ENCODE measurements at regions of chr22 and their contacts with region 1.

Region 1: GRCh38 chr22:20016734-20017621 is at the start of gene ARVCF:
- DNase-seq: peak; percentile 94 to 96 (median 95)
- ATAC-seq: peak; percentile 30 to 75 (median 70)
- H3K4me3 ChIP-seq: peak within 1 kb of the TSS; percentile 59 to 93 (median 80)
- H3K27ac ChIP-seq: peak within 1 kb of the TSS in 6 of 12 donors; percentile 17 to 80 (median 50)
- H3K4me1 ChIP-seq: peaks cover 3 to 47% (median 26%) of the 10 kb centered on the region in 12 donors
- H3K27me3 ChIP-seq: peaks cover 0 to 20% (median 0%) of the 10 kb centered on the region in 9 donors
- CTCF ChIP-seq: peak in 7 of 12 donors; percentile 9 to 41 (median 21)
- POLR2A ChIP-seq: peak in 1 of 2 donors; percentile 30
- total RNA-seq, gene ARVCF: 21.2 to 46.6 (median 33.3) TPM

Region 2: GRCh38 chr22:19959043-19959586 is 57.9 kb before region 1 on chr22:
- intact Hi-C with region 1: no loop called
- DNase-seq: peak; percentile 73 to 85 (median 80)
- ATAC-seq: peak; percentile 11 to 65 (median 54)
- H3K4me3 ChIP-seq: peak overlapping the region in 9 of 12 donors; percentile 8 to 42 (median 26)
- H3K27ac ChIP-seq: peak overlapping the region in 7 of 12 donors; percentile 14 to 70 (median 42)
- H3K4me1 ChIP-seq: peaks cover 0 to 55% (median 29%) of the 10 kb centered on the region in 12 donors
- H3K27me3 ChIP-seq: no peaks in the 10 kb centered on the region
- CTCF ChIP-seq: no peak
- POLR2A ChIP-seq: no peak

Region 3: GRCh38 chr22:19970479-19971275 is 46.3 kb before region 1 on chr22:
- intact Hi-C with region 1: loop called (anchors 1 to 2 kb)
- DNase-seq: peak; percentile 56 to 89 (median 64)
- ATAC-seq: peak; percentile 62 to 77 (median 70)
- H3K4me3 ChIP-seq: no peak overlapping the region
- H3K27ac ChIP-seq: peak overlapping the region in 3 of 12 donors; percentile 23 to 55 (median 41)
- H3K4me1 ChIP-seq: peaks cover 0 to 32% (median 5%) of the 10 kb centered on the region in 12 donors
- H3K27me3 ChIP-seq: no peaks in the 10 kb centered on the region
- CTCF ChIP-seq: peak; percentile 90 to 100 (median 95)
- POLR2A ChIP-seq: no peak

Region 4: GRCh38 chr22:19986410-19987341 is 30.3 kb before region 1 on chr22:
- intact Hi-C with region 1: loop called in 1 of 10 experiments (anchors 2 kb)
- DNase-seq: peak; percentile 85 to 93 (median 87)
- ATAC-seq: peak; percentile 17 to 87 (median 70)
- H3K4me3 ChIP-seq: peak overlapping the region; percentile 58 to 96 (median 86)
- H3K27ac ChIP-seq: peak overlapping the region; percentile 72 to 98 (median 92)
- H3K4me1 ChIP-seq: peaks cover 4 to 78% (median 50%) of the 10 kb centered on the region in 12 donors
- H3K27me3 ChIP-seq: no peaks in the 10 kb centered on the region
- CTCF ChIP-seq: no peak
- POLR2A ChIP-seq: peak; percentile 93 to 95

Region 5: GRCh38 chr22:20052309-20053259 is 35.6 kb after region 1 on chr22:
- intact Hi-C with region 1: no loop called
- DNase-seq: no peak
- ATAC-seq: peak in 3 of 4 donors; percentile 10 to 29 (median 17)
- H3K4me3 ChIP-seq: no peak overlapping the region
- H3K27ac ChIP-seq: no peak overlapping the region
- H3K4me1 ChIP-seq: peaks cover 0 to 13% (median 0%) of the 10 kb centered on the region in 12 donors
- H3K27me3 ChIP-seq: no peaks in the 10 kb centered on the region
- CTCF ChIP-seq: no peak
- POLR2A ChIP-seq: no peak

Region 6: DNA sequence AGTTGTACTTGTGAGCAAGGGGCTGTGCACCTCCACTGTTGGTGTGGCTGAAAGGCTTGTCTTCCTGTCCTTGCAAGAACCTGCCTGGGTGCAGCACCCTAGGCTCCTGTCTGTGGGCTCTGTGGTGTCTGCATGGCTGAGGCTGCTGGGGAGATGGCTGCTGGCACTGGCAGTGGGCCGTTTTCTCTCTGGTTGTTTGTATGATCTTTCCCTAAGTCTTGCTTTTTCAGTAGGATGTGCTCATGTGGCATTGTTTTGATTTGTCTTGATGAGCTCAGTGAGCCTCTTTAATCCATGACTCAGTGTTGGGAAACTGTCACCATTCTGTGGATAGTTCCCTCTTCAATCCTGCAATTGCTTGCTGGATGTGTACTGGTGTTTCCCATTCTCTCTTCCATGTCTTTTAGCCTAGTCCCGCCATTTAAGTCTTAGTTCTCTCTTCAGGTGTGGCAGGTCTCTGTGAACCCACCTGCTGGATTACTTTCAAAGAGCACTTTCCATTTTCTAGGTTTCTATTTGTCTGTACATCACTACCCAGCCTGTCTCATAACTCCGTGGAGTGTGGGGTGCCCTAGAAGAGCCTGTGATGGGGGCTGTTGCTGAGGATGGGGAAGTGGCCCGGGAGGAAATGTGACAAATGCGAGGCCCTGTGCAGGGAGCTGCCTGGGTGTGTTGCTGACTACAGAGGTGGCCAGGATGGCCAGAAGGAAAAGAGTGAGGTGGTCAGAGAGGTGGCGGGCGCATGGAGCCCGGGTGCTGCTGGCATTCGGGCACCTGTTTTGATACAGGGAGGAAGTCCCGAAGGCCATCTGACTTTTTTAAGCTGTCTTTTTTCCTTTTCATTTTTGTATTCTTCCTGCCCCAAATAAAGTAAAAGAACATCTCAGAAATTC is 73.6 kb after region 1 on chr22:
- intact Hi-C with region 1: loop called in 1 of 10 experiments (anchors 5 kb)
- DNase-seq: peak in 2 of 5 donors; percentile 9 to 14
- ATAC-seq: no peak
- H3K4me3 ChIP-seq: no peak overlapping the region
- H3K27ac ChIP-seq: peak overlapping the region in 1 of 12 donors; percentile 30
- H3K4me1 ChIP-seq: peaks cover 0 to 14% (median 3%) of the 10 kb centered on the region in 12 donors
- H3K27me3 ChIP-seq: no peaks in the 10 kb centered on the region
- CTCF ChIP-seq: no peak
- POLR2A ChIP-seq: no peak

Region 7: GRCh38 chr22:20116951-20117645 is 100.1 kb after region 1 on chr22 and contains the start of gene TRMT2A:
- intact Hi-C with region 1: loop called in 2 of 10 experiments (anchors 10 kb)
- DNase-seq: peak; percentile 98 to 99 (median 98)
- ATAC-seq: peak; percentile 92 to 95 (median 92)
- H3K4me3 ChIP-seq: peak within 1 kb of the TSS; percentile 61 to 99 (median 85)
- H3K27ac ChIP-seq: peak within 1 kb of the TSS; percentile 49 to 93 (median 86)
- H3K4me1 ChIP-seq: peaks cover 0 to 52% (median 30%) of the 10 kb centered on the region in 12 donors
- H3K27me3 ChIP-seq: no peaks in the 10 kb centered on the region
- CTCF ChIP-seq: peak in 6 of 12 donors; percentile 20 to 57 (median 41)
- POLR2A ChIP-seq: peak in 1 of 2 donors; percentile 74
- total RNA-seq, gene TRMT2A: 18.2 to 31.3 (median 20.2) TPM

Region 8: GRCh38 chr22:20130739-20131596 is 114.0 kb after region 1 on chr22:
- intact Hi-C with region 1: loop called in 1 of 10 experiments (anchors 5 kb)
- DNase-seq: peak; percentile 91 to 96 (median 93)
- ATAC-seq: peak; percentile 72 to 90 (median 86)
- H3K4me3 ChIP-seq: peak overlapping the region; percentile 88 to 100 (median 99)
- H3K27ac ChIP-seq: peak overlapping the region; percentile 94 to 100 (median 98)
- H3K4me1 ChIP-seq: peaks cover 6 to 51% (median 38%) of the 10 kb centered on the region in 12 donors
- H3K27me3 ChIP-seq: no peaks in the 10 kb centered on the region
- CTCF ChIP-seq: no peak
- POLR2A ChIP-seq: peak in 1 of 2 donors; percentile 27

Region 9: DNA sequence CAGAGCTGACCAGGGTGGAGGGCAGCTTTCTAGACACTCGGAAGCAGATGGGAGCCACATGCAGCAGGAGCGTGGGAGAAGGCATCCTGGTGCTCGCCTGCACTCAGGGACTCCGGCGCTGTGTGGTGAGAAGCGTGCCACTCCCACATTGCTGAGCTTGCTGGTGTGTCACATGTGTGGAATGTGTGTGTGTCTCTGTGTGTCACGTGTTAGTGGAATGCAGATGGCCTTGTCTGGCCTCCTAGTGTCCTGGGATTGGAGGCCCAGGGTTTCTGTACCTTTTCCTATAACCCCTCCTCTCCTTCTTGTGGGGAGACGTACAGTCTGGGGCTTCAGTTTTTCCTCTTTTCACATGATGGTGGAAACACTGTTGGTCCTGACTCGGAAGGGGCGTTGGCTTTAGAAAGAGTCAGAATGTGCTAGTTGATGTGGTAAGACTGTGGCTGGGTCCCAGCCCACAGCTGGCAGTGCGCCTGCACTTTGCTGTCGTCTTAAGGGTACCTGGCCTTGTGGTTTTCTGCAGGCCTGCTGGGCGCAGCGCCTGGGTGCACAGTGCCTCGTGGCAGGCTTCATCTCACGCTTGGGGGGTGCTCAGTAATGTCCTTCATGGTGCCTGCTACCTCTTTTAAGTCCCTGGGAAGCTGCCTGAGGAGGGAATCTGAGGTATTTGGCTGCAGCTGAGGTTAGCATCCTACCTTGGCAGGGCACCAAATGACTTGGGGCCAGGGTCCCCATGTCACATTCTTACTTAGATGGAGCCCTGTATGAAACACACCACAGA is 552.2 kb after region 1 on chr22:
- intact Hi-C with region 1: no loop called
- DNase-seq: peak in 4 of 5 donors; percentile 35 to 82 (median 73)
- ATAC-seq: peak; percentile 75 to 87 (median 83)
- H3K4me3 ChIP-seq: no peak overlapping the region
- H3K27ac ChIP-seq: peak overlapping the region in 9 of 12 donors; percentile 7 to 74 (median 38)
- H3K4me1 ChIP-seq: peaks cover 0 to 73% (median 24%) of the 10 kb centered on the region in 12 donors
- H3K27me3 ChIP-seq: no peaks in the 10 kb centered on the region
- CTCF ChIP-seq: no peak
- POLR2A ChIP-seq: no peak

Measured in heart left ventricle (tissue), 16 donors.